Activated CD4-positive, alpha-beta T cell treated with anti-CD3 and anti-CD28 coated beads, Interleukin-2, amount 10 ng/mL, durations not matched to agents 24 days and 14 days (primary cell): ENCODE measurements at regions of chr1 and their contacts with region 1.

Region 1: GRCh38 chr1:201877877-201878401 is 10.8 kb upstream of the SHISA4 start:
- DNase-seq: peak; percentile 77
- H3K4me3 Mint-ChIP-seq: no peak overlapping the region
- H3K27ac Mint-ChIP-seq: no peak overlapping the region
- H3K4me1 Mint-ChIP-seq: peaks cover 2% of the 10 kb centered on the region
- H3K27me3 Mint-ChIP-seq: no peaks in the 10 kb centered on the region

Region 2: DNA sequence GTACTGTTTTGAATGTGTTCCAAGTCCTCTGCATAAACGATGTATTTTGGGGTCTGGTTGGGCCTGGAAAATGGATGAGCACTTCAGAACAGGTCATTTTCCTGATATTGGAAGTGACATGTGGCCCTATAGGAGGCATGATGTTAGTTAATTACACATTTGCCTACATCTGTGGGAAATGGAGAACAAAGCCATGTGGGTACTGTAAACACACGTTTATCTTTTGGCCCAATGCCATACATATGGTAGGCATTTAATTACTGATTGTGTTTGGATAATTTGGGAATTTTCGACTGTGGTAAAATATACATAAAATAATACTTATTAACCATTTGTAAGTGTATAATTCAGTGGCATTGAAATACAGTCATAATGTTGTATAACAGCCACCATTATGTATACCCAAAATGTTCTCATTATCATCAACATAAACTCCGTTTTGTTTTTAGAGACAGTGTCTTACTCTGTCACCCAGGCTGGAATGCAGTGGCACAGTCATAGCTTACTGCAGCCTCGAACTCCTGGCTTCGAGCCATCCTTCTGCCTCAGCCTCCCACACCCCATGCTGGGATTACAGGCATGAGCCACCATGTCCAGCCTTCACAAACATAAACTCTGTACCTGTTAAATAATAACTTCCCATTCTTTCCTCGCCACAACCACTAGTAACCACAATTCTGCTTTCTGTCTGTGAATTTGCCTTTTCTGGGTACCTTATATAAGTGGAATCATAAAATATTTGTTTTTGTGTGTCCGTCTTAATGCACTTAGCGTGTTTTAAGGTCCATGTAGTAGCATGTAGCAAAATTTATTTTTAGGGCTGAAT is 92.6 kb after region 1 on chr1:
- intact Hi-C with region 1: loop called (anchors 2 kb)
- DNase-seq: no peak
- H3K4me3 Mint-ChIP-seq: no peak overlapping the region
- H3K27ac Mint-ChIP-seq: no peak overlapping the region
- H3K4me1 Mint-ChIP-seq: peaks cover 3% of the 10 kb centered on the region
- H3K27me3 Mint-ChIP-seq: peaks cover 12% of the 10 kb centered on the region